ENCODE measurements at regions of chr1 and their contacts with region 1.

Region 1: GRCh38 chr1:229186373-229187056 is 84.4 kb upstream of the RAB4A start:
- DNase-seq: no peak
- H3K4me3 ChIP-seq: no peak overlapping the region
- CTCF ChIP-seq: no peak

Region 2: DNA sequence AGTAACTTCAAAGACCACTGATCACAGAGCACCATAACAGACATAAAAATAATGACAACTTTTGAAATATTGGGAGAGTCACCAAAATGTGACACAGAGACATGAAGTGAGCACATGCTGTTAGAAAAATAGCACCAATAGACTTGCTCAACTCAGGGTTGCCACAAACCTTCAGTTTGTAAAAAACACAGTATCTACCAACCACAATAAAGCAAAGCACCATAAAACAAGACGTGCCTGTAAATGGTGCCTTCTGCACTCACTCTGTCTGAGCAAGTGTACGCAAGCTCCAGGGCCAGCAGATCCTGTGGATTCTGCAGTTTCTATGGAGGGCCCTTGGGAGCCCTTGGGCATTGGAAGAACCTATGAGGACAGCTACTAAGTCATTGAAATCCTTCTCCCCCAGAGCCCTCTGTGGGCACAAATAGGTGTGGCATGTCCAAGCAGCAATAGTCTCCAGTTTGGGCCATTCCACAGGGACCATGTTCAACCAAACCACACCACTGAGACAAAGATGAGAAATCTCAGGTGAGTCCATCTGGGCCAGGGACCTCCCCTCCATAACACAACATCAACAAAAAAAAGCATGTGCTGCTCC is 32.5 kb before region 1 on chr1:
- in situ Hi-C with region 1: loop called (anchors 5 kb)
- DNase-seq: no peak
- H3K4me3 ChIP-seq: no peak overlapping the region
- CTCF ChIP-seq: no peak

Measured in astrocyte of the cerebellum (primary cell).